PC-9 (cell line): ENCODE measurements at regions of chr4 and their contacts with region 1.

Region 1: DNA sequence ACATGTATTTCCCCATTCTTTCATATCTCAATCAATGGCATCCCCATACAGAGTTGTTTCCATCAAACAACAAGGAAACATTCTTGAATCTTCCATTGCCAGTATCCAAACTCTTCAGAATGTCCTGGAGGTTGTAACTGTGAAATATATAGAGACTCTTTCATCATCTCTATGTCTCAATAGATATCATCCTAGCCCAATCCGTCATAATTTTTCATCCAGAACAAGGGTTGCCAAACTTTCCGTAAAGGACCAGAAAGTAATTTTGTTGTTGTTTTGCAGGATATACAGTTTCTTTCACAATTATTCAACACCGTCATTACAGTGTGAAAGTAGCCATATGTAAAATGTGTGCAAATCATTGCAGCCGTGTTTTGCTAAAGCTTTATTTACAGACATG is 15.2 kb upstream of the CXCL6 start:
- DNase-seq: no peak
- H3K4me3 ChIP-seq: no peak overlapping the region
- H3K27ac ChIP-seq: no peak overlapping the region
- H3K4me1 ChIP-seq: peaks cover 6% of the 10 kb centered on the region; the same call in 1 of the 2 replicates
- H3K27me3 ChIP-seq: no peaks in the 10 kb centered on the region
- CTCF ChIP-seq: no peak

Region 2: DNA sequence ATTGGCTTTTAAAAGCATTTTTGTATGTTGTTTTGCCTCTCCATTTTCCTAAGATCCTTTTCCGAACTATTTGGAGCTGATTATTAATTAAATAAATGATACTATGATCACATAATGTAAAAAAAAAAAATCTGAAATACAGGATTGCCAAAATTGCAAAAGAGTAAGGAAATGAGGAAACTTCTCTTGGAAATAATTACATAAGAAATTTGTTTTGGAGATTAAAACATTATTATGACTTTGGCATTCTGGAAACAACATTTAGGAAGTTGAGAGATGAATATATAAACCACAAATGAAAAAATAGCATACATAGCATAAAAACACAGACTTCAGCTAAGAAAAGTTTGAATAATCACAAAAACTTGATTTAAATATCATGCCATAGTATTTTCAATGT is 127.0 kb after region 1 on chr4:
- CTCF ChIA-PET with region 1: interaction called, 14 read pairs
- POLR2A ChIA-PET with region 1: no interaction called
- intact Hi-C with region 1: no loop called
- DNase-seq: no peak
- H3K4me3 ChIP-seq: no peak overlapping the region
- H3K27ac ChIP-seq: no peak overlapping the region
- H3K4me1 ChIP-seq: no peaks in the 10 kb centered on the region
- H3K27me3 ChIP-seq: no peaks in the 10 kb centered on the region
- CTCF ChIP-seq: no peak